ENCODE measurements at regions of chr20 and their contacts with region 1.

Region 1: GRCh38 chr20:5788385-5788895 is 38.2 kb downstream of the SHLD1 start:
- DNase-seq: peak; percentile 54 to 71
- ATAC-seq: peak; percentile 85 to 93 (median 90)
- H3K4me3 ChIP-seq: no peak overlapping the region
- H3K27ac ChIP-seq: no peak overlapping the region
- H3K4me1 ChIP-seq: peaks cover 9% of the 10 kb centered on the region
- H3K27me3 ChIP-seq: no peaks in the 10 kb centered on the region
- CTCF ChIP-seq: peak; percentile 94

Region 2: GRCh38 chr20:5557123-5557522 is 231.3 kb before region 1 on chr20:
- intact Hi-C with region 1: loop called in 1 of 2 experiments (anchors 5 kb)
- DNase-seq: peak; percentile 27 to 64
- ATAC-seq: peak; percentile 37 to 87 (median 75)
- H3K4me3 ChIP-seq: no peak overlapping the region
- H3K27ac ChIP-seq: no peak overlapping the region
- H3K4me1 ChIP-seq: no peaks in the 10 kb centered on the region
- H3K27me3 ChIP-seq: no peaks in the 10 kb centered on the region
- CTCF ChIP-seq: peak; percentile 60

Region 3: GRCh38 chr20:5569021-5569420 is 219.4 kb before region 1 on chr20:
- intact Hi-C with region 1: loop called in 1 of 2 experiments (anchors 1 kb)
- DNase-seq: no peak
- ATAC-seq: peak in 1 of 4 donors; percentile 75
- H3K4me3 ChIP-seq: no peak overlapping the region
- H3K27ac ChIP-seq: no peak overlapping the region
- H3K4me1 ChIP-seq: no peaks in the 10 kb centered on the region
- H3K27me3 ChIP-seq: no peaks in the 10 kb centered on the region
- CTCF ChIP-seq: peak; percentile 49

Region 4: DNA sequence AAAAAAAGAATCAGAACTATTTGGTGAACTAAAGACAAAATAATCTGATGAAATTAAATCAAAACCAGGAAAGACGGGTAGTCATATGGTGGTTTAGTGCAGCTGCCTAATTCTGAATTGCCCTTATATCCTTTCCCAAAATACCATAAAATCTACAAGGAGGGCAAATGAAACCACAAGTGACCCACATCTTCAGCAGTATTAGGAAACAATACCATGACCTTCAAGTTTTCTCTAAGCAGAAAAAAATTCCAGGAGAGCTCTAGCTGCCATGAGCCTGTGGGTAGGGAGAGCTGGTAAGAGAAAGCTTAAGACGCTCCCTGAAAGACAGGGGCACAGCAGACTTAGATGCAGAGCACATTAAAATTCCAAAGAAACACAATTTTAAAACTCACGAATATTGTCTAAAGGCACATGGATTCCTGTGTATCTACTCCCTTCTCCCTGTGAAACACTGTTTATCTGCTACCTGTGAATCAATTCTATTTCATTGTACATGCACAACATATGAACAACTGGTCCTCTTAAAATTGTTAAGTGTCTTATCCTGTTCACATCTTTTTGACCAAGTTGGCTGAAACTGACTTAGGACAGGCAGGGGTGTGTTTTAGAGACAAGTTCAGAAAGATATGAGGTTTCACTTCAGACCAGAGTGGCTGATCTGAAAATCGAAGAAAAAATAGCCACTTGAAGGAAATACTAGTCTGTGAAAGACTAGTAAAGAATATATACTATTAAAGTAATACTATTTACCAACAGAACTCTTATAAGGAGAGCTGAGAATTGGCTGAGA is 191.8 kb before region 1 on chr20:
- intact Hi-C with region 1: no loop called
- DNase-seq: no peak
- ATAC-seq: no peak
- H3K4me3 ChIP-seq: no peak overlapping the region
- H3K27ac ChIP-seq: no peak overlapping the region
- H3K4me1 ChIP-seq: no peaks in the 10 kb centered on the region
- H3K27me3 ChIP-seq: no peaks in the 10 kb centered on the region
- CTCF ChIP-seq: no peak

Region 5: DNA sequence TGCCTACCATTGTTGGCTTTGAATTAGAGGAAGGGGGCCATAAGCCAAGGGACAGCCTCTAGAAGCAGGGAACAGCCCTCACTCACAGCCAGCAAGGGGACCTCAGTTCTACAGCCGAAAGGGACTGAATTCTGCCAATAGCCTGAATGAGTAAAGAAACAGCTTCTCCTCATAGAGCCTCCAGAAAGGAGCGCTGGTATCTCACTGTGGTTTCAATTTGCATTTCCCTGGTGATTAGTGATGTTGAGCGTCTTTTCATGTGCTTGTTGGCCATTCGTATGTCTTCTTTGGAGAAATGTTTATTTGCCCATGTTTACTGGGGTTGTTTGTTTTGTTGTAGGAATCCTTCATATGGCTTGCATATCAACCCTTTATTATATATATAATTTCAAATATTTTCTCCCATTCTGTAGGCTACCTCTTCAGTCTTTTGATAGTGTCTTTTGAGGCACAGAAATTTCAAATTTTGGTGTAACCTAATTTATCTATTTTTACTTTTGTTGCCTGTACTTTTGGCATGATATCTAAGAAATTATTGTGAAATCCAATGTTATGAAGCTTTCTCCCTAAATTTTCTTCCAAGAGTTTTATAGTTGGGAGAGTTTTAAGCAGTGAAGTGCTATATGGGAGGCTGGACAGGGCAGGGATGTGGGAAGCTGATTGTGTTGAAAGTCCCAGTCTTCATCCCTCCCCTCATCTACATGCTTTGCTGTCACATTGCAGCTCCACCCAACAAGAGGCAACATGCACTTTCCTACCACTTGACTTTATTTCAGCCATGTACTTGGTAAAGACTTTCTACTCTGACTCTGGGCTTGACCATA is 120.5 kb before region 1 on chr20:
- intact Hi-C with region 1: no loop called
- DNase-seq: no peak
- ATAC-seq: no peak
- H3K4me3 ChIP-seq: no peak overlapping the region
- H3K27ac ChIP-seq: no peak overlapping the region
- H3K4me1 ChIP-seq: no peaks in the 10 kb centered on the region
- H3K27me3 ChIP-seq: no peaks in the 10 kb centered on the region
- CTCF ChIP-seq: no peak

Measured in psoas muscle (tissue), 8 donors.